PC-3 (cell line): ENCODE measurements at regions of chr5 and their contacts with region 1.

Region 1: GRCh38 chr5:10283927-10284635 is 23.6 kb downstream of the CMBL start:
- DNase-seq: peak; percentile 93
- ATAC-seq: peak; percentile 97
- H3K4me3 ChIP-seq: no peak overlapping the region
- H3K27ac ChIP-seq: no peak overlapping the region
- H3K4me1 ChIP-seq: no peaks in the 10 kb centered on the region
- H3K27me3 ChIP-seq: no peaks in the 10 kb centered on the region
- CTCF ChIP-seq: peak; percentile 99

Region 2: GRCh38 chr5:10307206-10308148 is 23.4 kb after region 1 on chr5 and contains the start of gene CMBL:
- CTCF ChIA-PET with region 1: interaction called, 4 read pairs
- POLR2A ChIA-PET with region 1: no interaction called
- intact Hi-C with region 1: loop called (anchors 2 kb)
- DNase-seq: peak; percentile 92
- ATAC-seq: peak; percentile 61
- H3K4me3 ChIP-seq: peak within 1 kb of the TSS; percentile 76
- H3K27ac ChIP-seq: peak within 1 kb of the TSS; percentile 88
- H3K4me1 ChIP-seq: peaks cover 42% of the 10 kb centered on the region
- H3K27me3 ChIP-seq: no peaks in the 10 kb centered on the region
- CTCF ChIP-seq: no peak
- total RNA-seq, gene CMBL: 35.7 and 38.4 TPM in 2 replicates

Region 3: GRCh38 chr5:10353241-10354047 is 69.4 kb after region 1 on chr5 and contains the start of gene MARCHF6:
- CTCF ChIA-PET with region 1: interaction called, 11 read pairs
- POLR2A ChIA-PET with region 1: no interaction called
- intact Hi-C with region 1: loop called (anchors 1 kb)
- DNase-seq: peak; percentile 99
- ATAC-seq: peak; percentile 83
- H3K4me3 ChIP-seq: peak within 1 kb of the TSS; percentile 92
- H3K27ac ChIP-seq: peak within 1 kb of the TSS; percentile 84
- H3K4me1 ChIP-seq: peaks cover 26% of the 10 kb centered on the region
- H3K27me3 ChIP-seq: no peaks in the 10 kb centered on the region
- CTCF ChIP-seq: no peak
- total RNA-seq, gene MARCHF6: 140 TPM in 2 replicates

Region 4: DNA sequence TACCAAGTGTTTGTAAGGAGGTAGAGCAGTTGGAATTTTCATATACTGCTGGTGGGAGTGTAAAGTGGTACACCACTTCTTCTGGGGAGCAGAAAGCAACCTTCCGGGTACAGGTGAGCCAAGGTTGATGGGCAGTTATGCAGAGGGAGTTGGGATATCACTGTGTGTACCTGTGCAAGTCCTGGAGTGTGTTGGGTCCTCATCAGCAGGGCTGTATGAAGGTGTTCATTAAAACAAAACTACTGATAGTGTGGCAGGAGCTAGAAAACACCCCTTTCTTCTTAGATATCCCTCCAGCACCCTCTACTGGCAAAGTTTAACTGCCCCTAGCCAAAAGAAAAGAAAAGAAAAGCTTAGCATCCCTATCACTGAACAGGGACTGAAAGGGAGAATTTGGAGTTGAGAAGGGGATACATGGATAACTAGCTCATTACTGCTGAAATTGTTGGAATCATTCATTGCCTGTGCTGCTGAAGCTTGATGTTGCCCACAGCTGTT is 80.2 kb after region 1 on chr5:
- CTCF ChIA-PET with region 1: interaction called, 13 read pairs
- POLR2A ChIA-PET with region 1: no interaction called
- intact Hi-C with region 1: loop called (anchors 2 kb)
- DNase-seq: peak; percentile 80
- ATAC-seq: peak; percentile 26; the same call in 1 of the 2 replicates
- H3K4me3 ChIP-seq: no peak overlapping the region
- H3K27ac ChIP-seq: no peak overlapping the region
- H3K4me1 ChIP-seq: peaks cover 13% of the 10 kb centered on the region
- H3K27me3 ChIP-seq: no peaks in the 10 kb centered on the region
- CTCF ChIP-seq: peak; percentile 91

Region 5: GRCh38 chr5:10424124-10424731 is 140.1 kb after region 1 on chr5:
- CTCF ChIA-PET with region 1: interaction called, 11 read pairs
- POLR2A ChIA-PET with region 1: no interaction called
- intact Hi-C with region 1: loop called (anchors 1 kb)
- DNase-seq: peak; percentile 65
- ATAC-seq: peak; percentile 67
- H3K4me3 ChIP-seq: no peak overlapping the region
- H3K27ac ChIP-seq: no peak overlapping the region
- H3K4me1 ChIP-seq: peaks cover 13% of the 10 kb centered on the region
- H3K27me3 ChIP-seq: no peaks in the 10 kb centered on the region
- CTCF ChIP-seq: peak; percentile 87

Region 6: GRCh38 chr5:10563945-10564837 is 280.1 kb after region 1 on chr5 and contains the start of gene ANKRD33B:
- CTCF ChIA-PET with region 1: interaction called, 12 read pairs
- POLR2A ChIA-PET with region 1: no interaction called
- intact Hi-C with region 1: no loop called
- DNase-seq: peak; percentile 88
- ATAC-seq: peak; percentile 69
- H3K4me3 ChIP-seq: peak within 1 kb of the TSS; percentile 82
- H3K27ac ChIP-seq: peak within 1 kb of the TSS; percentile 72
- H3K4me1 ChIP-seq: peaks cover 29% of the 10 kb centered on the region
- H3K27me3 ChIP-seq: no peaks in the 10 kb centered on the region
- CTCF ChIP-seq: no peak
- total RNA-seq, gene ANKRD33B: 13.2 and 14.9 TPM in 2 replicates